ENCODE measurements at regions of chr17 and their contacts with region 1.

Region 1: DNA sequence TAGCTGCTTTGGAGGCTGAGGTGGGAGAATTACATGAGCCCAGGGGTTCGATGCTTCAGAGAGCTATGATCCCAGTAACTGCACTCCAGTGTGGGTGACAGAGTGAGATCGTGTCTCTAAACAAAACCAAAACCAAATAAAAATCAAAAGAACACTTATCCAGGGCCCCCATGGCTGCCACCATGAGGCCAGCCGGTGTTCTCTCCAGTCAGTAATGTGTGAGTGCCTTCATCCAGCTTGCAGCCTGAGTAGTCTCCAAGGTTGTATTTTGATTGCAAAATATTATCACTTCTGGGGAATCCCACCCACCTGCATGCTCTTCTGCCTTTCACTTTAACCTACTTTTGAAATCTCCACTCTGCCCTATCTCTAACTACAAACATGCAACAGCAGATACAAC is 221.0 kb upstream of the WSB1 start:
- DNase-seq: no peak
- CTCF ChIP-seq: no peak

Region 2: DNA sequence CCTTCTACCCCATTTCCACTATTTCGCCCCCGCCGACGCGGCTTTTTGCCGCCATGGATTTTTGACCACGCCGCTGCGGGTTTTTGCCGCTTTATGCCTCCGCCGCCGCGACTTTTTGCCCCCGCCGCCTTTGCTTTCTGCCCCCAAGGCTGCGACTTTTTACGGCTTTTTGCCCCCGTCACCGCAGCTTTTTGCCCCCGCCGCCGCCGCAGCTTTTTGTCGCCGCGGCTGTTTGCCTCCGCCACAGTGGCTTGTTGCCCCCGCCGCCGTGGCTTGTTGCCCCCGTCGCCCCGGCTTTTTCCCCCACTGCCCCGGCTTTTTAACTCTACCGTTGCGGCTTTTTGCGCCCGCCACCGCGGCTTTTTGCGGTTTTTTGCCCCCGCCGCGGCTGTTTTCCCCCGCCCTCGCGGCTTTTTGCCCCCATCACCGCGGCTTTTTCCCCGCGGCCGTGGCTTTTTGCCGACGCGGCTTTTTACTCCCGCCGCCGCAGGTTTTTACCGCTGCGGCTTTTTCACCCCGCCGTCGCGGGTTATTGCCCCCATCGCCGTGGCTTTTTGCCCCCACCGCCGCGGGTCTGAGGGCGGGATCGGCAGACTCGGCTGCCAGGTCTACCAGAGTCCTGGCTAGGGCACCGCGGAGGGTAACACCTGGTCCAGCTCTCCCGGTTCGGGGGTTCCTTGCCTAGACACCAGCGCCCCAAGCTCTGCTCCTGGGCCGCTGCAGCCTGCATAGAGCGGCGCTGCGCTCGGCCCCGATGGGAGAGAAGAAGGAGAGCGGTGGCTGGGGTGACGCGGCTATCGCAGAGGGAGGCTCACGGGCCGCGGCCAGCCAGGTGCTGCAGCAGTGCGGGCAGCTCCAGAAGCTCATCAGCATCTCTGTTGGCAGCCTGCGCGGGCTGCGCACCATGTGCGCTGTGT is 341.6 kb before region 1 on chr17:
- in situ Hi-C with region 1: loop called (anchors 25 kb)
- DNase-seq: peak; percentile 2
- CTCF ChIP-seq: no peak

Region 3: GRCh38 chr17:27332485-27333409 is 259.9 kb after region 1 on chr17:
- in situ Hi-C with region 1: loop called (anchors 25 kb)
- DNase-seq: peak; percentile 93
- CTCF ChIP-seq: peak; percentile 88

Region 4: DNA sequence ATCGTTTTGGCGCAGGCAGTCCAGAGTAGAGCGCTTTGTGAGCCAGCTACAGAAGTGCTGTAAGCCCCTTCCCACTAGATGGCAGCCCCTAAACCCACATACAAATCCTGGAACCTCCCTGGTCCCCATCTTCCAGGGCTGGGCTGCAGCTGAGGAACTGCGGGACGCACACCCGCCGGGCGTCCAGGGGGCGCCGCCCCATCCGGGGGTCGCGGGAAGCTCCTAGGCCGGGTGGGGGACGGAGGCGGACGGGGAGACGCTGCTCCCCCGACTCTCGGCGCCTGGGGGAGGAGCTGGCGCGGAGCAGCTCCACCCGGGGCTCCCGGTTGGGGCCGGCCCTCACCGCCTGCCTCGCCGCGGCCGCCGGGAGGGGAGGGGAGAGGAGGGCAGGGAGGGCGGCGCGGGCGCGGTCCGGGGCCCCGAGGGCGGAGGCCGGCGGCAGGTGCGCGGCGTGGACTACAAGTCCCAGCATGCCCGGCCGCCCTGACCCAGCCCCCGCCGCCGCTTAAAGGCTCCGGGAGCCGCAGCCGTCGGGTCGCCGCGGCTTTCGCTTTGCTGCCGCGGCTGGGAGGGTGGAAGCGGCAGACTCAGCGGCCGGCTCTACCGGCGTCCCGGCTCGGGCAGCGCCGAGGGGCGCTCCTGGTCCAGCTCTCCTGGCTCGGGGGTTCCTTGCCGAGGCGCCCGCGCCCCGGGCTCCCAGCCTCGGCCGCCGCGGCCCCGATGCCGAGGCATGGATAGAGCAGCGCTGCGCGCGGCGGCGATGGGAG is 383.2 kb after region 1 on chr17 and contains the start of gene KSR1:
- in situ Hi-C with region 1: no loop called
- DNase-seq: peak; percentile 94
- CTCF ChIP-seq: peak; percentile 30

Region 5: DNA sequence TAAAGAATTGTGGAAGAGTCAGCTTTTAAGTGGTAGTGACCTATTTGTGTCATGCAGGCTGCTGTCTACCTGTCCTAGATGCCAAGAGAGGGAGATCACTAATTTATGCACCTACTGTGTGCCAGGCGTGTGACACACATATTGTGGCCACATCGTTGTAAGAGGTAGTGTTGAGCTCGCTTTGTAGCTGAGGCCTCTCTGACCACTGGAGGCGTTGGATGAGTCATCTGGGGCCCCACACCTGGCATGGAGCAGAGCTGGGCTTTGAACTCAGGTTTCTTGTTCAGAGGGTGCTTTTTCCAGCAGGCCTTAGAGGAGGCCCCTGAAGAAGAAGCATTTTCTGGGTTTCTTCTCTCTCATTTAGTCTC is 505.8 kb after region 1 on chr17:
- in situ Hi-C with region 1: loop called (anchors 25 kb)
- DNase-seq: peak; percentile 84
- CTCF ChIP-seq: no peak